Heart right ventricle (tissue), 16 donors: ENCODE measurements at regions of chr5 and their contacts with region 1.

Region 1: DNA sequence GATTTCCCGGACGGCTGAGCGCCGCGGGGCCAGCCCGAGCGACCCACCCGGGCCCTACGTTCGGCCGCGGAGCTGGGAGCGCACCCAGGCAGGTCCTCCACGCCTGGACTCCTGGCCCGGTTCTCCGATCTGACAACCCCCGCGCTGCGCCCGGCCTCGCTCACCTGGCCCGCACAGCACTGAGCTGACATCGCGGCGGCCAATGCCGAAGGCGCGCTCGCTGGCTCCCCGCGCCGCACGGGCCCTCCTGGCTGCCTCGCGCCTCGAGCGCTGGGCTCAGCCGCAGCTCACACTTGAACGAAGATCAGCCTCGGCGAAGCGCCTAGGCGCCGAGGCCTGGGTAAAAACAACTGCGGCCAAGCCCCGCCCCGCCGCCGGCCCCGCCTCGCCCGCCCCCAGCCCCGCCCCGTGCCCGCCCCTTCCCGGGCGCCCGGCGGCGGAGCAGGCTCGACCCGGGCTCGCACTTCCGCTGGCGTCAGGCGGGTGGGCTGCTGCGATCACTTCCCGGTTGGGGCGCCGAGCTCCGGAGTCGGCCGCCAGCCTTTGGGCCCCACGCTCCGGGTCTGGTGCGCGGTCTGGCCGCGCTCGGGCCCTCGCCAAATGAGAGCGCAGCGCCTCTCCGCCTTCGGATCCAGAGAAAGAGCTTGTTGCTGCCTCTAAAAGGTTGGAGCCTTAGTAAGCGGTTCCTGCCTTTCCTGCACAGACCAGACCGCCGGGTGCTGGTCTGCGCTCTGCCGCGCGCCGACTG is at the start of gene SERINC5:
- DNase-seq: peak; percentile 87 to 88
- ATAC-seq: peak; percentile 89 to 95 (median 93)
- H3K4me3 ChIP-seq: peak within 1 kb of the TSS; percentile 70 to 97 (median 80)
- H3K27ac ChIP-seq: peak within 1 kb of the TSS; percentile 82 to 100 (median 94)
- H3K4me1 ChIP-seq: peaks cover 11 to 53% (median 36%) of the 10 kb centered on the region in 9 donors
- H3K27me3 ChIP-seq: no peaks in the 10 kb centered on the region
- CTCF ChIP-seq: no peak
- total RNA-seq, gene SERINC5: 13.2 to 21.9 (median 15.8) TPM

Region 2: GRCh38 chr5:79514391-79515105 is 741.4 kb before region 1 on chr5:
- intact Hi-C with region 1: loop called in 1 of 10 experiments (anchors 10 kb)
- DNase-seq: peak; percentile 89 to 91
- ATAC-seq: peak; percentile 86 to 92 (median 90)
- H3K4me3 ChIP-seq: peak overlapping the region; percentile 57 to 92 (median 81)
- H3K27ac ChIP-seq: peak overlapping the region; percentile 65 to 99 (median 94)
- H3K4me1 ChIP-seq: peaks cover 0 to 30% (median 10%) of the 10 kb centered on the region in 9 donors
- H3K27me3 ChIP-seq: peaks cover 0 to 41% (median 22%) of the 10 kb centered on the region in 7 donors
- CTCF ChIP-seq: no peak

Region 3: DNA sequence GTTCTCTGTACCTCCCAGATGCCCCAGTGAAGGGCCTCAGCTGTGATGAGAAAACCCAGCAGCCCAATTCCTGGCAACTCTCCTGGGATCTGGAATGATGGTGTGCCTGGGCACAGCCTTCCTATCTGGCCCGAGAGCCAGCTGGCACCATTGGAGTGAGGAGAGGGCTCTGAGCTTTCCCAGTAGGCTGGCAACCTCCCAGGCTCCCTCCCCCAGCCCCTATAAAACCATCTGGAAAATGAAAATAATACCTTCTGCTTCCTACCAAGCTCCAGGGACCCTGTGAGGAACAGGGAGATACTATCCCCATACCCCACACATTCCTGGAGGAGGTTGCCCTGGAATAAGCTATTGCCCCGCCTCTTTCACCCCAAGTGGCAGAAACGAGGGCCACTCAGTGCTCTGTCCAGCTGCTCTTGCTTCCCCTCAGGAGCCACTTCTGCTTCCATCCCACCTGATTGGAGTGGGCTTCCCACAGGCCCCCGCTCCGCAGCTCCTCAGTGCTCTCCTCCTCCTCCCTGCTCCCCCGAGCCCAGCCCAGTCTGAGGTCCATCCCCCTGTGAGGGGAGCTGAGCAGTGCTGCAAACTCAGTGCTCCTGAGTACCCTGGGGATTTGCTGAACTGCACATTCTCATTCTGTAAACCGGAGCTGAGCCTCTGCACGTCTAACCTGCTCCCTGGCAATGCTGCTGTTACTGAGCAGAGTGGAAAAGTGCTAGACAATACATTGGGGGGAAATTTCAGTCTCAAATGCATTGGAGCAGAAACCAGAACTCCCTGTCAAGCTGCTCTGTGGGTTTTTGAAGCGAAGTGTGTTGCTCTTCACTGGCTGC is 146.0 kb before region 1 on chr5:
- intact Hi-C with region 1: loop called in 1 of 10 experiments (anchors 5 kb)
- DNase-seq: peak; percentile 59 to 79
- ATAC-seq: peak; percentile 86 to 97 (median 92)
- H3K4me3 ChIP-seq: peak overlapping the region in 2 of 10 donors; percentile 12 to 22
- H3K27ac ChIP-seq: peak overlapping the region in 7 of 10 donors; percentile 25 to 77 (median 62)
- H3K4me1 ChIP-seq: peaks cover 0 to 33% (median 14%) of the 10 kb centered on the region in 9 donors
- H3K27me3 ChIP-seq: no peaks in the 10 kb centered on the region
- CTCF ChIP-seq: no peak

Region 4: DNA sequence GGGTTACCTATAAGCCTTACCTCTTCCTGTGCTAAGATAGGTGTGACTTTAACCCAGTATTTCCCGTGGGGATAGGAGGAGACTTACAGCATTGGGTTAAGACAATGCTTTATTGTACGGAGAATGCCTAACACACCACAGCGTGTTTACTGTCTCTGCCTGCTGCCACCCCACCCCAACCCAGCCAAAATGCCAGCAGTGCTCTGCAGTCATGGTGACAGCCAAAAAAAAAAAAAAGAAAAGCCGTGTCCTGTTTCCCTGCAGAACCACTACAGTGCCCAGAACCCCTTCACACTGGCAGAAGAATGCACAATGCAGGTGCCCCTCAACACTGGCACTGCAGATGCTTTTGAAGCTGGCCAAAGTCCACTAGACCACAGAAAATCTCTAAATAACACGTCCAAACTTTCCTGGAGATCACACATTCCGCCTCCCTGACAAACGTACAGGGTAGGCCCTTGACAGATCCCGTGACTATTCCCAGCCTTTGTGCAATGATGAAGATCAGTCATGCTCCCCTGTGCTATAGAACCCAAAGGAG is 102.2 kb before region 1 on chr5:
- intact Hi-C with region 1: loop called in 1 of 10 experiments (anchors 10 kb)
- DNase-seq: no peak
- ATAC-seq: peak; percentile 6 to 75 (median 68)
- H3K4me3 ChIP-seq: no peak overlapping the region
- H3K27ac ChIP-seq: peak overlapping the region in 9 of 10 donors; percentile 13 to 68 (median 48)
- H3K4me1 ChIP-seq: peaks cover 0 to 24% (median 10%) of the 10 kb centered on the region in 9 donors
- H3K27me3 ChIP-seq: no peaks in the 10 kb centered on the region
- CTCF ChIP-seq: no peak

Region 5: GRCh38 chr5:80204808-80205614 is 50.9 kb before region 1 on chr5:
- intact Hi-C with region 1: loop called in 1 of 10 experiments (anchors 10 kb)
- DNase-seq: peak in 1 of 2 donors; percentile 36
- ATAC-seq: peak; percentile 56 to 74 (median 62)
- H3K4me3 ChIP-seq: no peak overlapping the region
- H3K27ac ChIP-seq: peak overlapping the region in 9 of 10 donors; percentile 10 to 64 (median 61)
- H3K4me1 ChIP-seq: peaks cover 9 to 61% (median 45%) of the 10 kb centered on the region in 9 donors
- H3K27me3 ChIP-seq: no peaks in the 10 kb centered on the region
- CTCF ChIP-seq: no peak

Region 6: GRCh38 chr5:80407735-80408482 is 152.0 kb after region 1 on chr5 and contains the start of gene ZFYVE16:
- intact Hi-C with region 1: loop called in 2 of 10 experiments (anchors 5 to 10 kb)
- DNase-seq: peak; percentile 98 to 99
- ATAC-seq: peak; percentile 96 to 98 (median 98)
- H3K4me3 ChIP-seq: peak within 1 kb of the TSS; percentile 44 to 97 (median 88)
- H3K27ac ChIP-seq: peak within 1 kb of the TSS; percentile 83 to 99 (median 98)
- H3K4me1 ChIP-seq: peaks cover 0 to 52% (median 40%) of the 10 kb centered on the region in 9 donors
- H3K27me3 ChIP-seq: no peaks in the 10 kb centered on the region
- CTCF ChIP-seq: peak in 5 of 9 donors; percentile 13 to 58 (median 51)
- total RNA-seq, gene ZFYVE16: 27.0 to 52.6 (median 44.0) TPM